Activated CD4-positive, alpha-beta memory T cell treated with anti-CD3 and anti-CD28 coated beads for 36 hours (primary cell): ENCODE measurements at regions of chr1 and their contacts with region 1.

Region 1: DNA sequence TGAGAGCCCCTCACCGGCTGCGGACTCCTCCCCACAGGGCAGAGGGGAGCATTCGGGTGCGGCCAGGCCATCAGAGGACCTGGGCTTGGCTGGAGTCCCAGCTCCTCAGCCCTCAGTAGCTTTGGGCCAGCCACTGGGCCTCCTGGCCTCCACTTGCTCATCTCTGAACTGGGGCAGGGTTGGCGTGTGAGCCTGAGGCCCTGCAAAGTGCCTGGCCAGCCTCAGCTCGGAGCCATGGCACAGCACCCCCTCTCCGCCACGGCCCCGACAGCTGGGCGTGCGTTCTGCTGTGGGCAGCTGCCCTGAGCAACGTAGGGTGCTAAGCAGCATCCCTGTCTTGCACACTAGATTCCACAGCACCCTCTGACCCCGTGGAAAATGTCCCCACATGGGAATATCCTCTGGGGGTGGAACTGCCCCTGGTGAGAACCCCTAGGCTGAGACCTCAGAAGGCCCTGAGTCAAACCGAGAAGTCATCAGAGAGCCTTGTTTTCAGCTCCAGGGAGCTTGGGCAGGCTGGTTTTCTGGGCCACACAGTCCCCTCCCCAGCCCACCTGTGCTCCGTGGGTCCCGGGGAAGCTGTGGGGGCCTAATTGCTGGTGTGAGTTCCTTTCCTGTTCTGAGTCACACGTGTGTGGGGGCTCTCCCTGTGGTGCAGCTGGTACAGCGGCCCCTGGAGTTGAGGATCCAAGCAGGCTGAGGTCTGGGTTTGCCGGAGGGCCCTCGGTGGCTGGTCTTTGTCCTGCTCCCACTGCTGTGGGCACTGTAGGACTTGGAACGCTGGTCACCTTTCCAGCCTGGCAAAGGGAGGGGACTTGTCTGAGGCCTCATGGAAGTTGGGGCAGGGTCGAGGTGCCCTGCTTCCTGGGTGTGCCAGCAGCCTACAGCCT is 24.5 kb downstream of the TP73 start:
- DNase-seq: peak; percentile 31
- H3K4me3 Mint-ChIP-seq: no peak overlapping the region
- H3K27ac Mint-ChIP-seq: no peak overlapping the region
- H3K4me1 Mint-ChIP-seq: peaks cover 17% of the 10 kb centered on the region
- H3K27me3 Mint-ChIP-seq: peaks cover 13% of the 10 kb centered on the region

Region 2: GRCh38 chr1:3703731-3704371 is 27.0 kb after region 1 on chr1:
- CTCF ChIA-PET with region 1: no interaction called
- POLR2A ChIA-PET with region 1: no interaction called
- intact Hi-C with region 1: loop called (anchors 2 kb)
- DNase-seq: no peak
- H3K4me3 Mint-ChIP-seq: no peak overlapping the region
- H3K27ac Mint-ChIP-seq: no peak overlapping the region
- H3K4me1 Mint-ChIP-seq: peaks cover 4% of the 10 kb centered on the region
- H3K27me3 Mint-ChIP-seq: peaks cover 15% of the 10 kb centered on the region

Region 3: DNA sequence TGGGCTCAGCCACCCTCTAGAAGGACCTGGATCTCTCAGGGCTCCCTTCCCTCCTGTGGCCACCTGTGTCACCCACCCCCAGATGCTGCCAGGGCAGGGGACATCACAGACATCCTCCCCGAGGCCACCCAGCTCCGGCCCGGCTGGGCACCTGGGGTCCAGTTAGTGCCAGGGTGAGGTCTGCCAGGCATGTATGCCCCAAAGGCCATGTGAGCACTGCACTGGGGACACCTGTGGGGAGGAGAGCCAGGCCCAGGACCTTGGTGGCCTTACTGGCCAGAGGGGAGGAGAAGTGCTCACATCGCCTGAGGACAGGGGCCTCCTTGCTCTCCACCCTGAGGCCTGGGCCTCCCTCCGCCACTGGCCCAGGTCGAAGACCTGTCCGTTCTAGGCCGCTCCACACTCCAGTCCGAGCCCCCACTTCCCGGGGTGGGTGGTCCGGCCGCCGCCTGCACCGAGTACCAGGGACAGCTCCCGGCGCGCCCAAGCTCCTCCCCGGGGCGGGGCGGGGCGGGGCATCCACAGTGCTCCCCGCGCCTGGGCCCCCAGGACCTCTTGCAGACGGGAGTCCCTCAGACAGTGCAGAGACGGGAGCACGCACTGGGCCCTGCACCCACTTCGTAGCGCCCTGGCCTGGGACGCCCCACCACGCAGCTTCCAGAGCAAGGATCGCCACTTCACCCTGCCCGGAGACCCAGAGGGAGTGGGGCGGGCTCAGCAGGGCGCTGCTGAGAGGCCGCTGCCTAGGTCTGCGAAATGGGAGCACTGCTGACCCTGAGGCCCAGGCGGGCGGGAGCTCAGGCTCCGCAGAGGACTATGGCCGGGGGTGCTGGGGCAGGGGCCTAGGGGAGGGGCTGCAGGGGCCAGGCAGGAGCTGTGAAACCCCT is 41.1 kb after region 1 on chr1:
- CTCF ChIA-PET with region 1: no interaction called
- POLR2A ChIA-PET with region 1: no interaction called
- intact Hi-C with region 1: no loop called
- DNase-seq: peak; percentile 25
- H3K4me3 Mint-ChIP-seq: no peak overlapping the region
- H3K27ac Mint-ChIP-seq: no peak overlapping the region
- H3K4me1 Mint-ChIP-seq: peaks cover 4% of the 10 kb centered on the region
- H3K27me3 Mint-ChIP-seq: no peaks in the 10 kb centered on the region